A673 (cell line): ENCODE measurements at regions of chr10 and their contacts with region 1.

Region 1: DNA sequence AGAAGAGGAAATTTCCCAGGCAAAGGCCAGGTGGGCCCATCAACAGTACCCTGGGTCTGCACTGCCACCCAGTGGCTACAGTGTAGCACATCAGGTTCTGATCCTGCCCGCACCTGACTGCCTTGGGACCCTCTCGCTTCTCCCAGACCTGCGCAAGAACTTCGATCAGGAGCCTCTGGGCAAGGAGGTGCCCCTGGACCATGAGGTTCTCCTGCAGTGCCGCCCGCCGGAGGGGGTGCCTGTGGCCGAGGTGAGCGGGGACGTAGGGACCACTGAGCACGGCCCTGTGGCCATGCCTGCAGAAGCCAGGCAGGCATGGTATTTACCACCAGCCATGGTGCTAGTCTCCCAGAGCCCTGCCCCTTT is 33.9 kb upstream of the SLC29A3 start:
- DNase-seq: peak; percentile 67
- H3K4me3 ChIP-seq: no peak overlapping the region
- H3K27ac ChIP-seq: no peak overlapping the region
- H3K4me1 ChIP-seq: peaks cover 10% of the 10 kb centered on the region
- H3K27me3 ChIP-seq: no peaks in the 10 kb centered on the region
- CTCF ChIP-seq: peak; percentile 81

Region 2: GRCh38 chr10:69807122-69807521 is 1478.0 kb before region 1 on chr10:
- CTCF ChIA-PET with region 1: no interaction called
- POLR2A ChIA-PET with region 1: no interaction called
- intact Hi-C with region 1: no loop called
- DNase-seq: no peak
- H3K4me3 ChIP-seq: no peak overlapping the region
- H3K27ac ChIP-seq: no peak overlapping the region
- H3K4me1 ChIP-seq: peaks cover 7% of the 10 kb centered on the region
- H3K27me3 ChIP-seq: no peaks in the 10 kb centered on the region
- CTCF ChIP-seq: no peak

Region 3: DNA sequence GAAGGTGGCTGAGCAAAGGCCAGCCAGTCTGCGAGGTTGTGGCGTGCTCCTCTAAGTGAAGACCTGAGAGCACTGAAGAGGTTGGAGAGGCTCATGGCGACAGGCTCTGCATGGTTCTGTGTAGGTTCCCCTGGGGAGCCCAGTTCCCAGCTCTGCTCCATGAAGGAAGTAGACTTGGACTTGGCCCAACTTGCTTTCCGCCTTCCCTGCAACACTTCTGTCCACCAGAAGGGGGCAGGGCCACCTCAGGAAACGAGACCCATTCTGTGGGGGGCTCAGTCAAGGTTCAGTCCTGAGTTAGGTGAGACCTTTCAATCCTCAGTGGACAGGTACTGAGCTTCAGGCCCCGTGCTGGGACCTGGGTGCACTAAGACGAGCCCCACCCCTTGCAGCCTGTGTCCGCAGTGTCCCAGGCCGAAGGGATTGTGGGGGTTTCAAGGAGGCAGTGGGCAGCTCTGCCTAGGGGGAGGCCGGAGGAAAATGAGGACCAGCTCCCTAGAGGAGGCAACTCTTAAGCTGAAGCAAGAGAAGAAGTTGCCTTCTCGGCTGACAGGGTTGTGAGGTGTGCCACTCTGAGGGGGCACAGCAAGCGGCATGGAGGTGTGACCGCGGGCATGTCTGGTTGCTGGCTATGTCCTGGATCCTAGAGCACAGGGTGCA is 381.8 kb before region 1 on chr10:
- CTCF ChIA-PET with region 1: interaction called, 7 read pairs
- POLR2A ChIA-PET with region 1: no interaction called
- intact Hi-C with region 1: loop called (anchors 2 kb)
- DNase-seq: peak; percentile 71
- H3K4me3 ChIP-seq: no peak overlapping the region
- H3K27ac ChIP-seq: no peak overlapping the region
- H3K4me1 ChIP-seq: peaks cover 12% of the 10 kb centered on the region
- H3K27me3 ChIP-seq: no peaks in the 10 kb centered on the region
- CTCF ChIP-seq: peak; percentile 97

Region 4: GRCh38 chr10:70925377-70926225 is 359.6 kb before region 1 on chr10:
- CTCF ChIA-PET with region 1: interaction called, 3 read pairs
- POLR2A ChIA-PET with region 1: no interaction called
- intact Hi-C with region 1: loop called (anchors 2 kb)
- DNase-seq: peak; percentile 55
- H3K4me3 ChIP-seq: no peak overlapping the region
- H3K27ac ChIP-seq: no peak overlapping the region
- H3K4me1 ChIP-seq: peaks cover 7% of the 10 kb centered on the region
- H3K27me3 ChIP-seq: no peaks in the 10 kb centered on the region
- CTCF ChIP-seq: peak; percentile 93